ENCODE measurements at regions of chr12 and their contacts with region 1.

Region 1: GRCh38 chr12:108803428-108804105 is 53.8 kb downstream of the SSH1 start:
- DNase-seq: peak; percentile 94
- H3K4me3 ChIP-seq: peak overlapping the region in 1 of 4 donors; percentile 5
- H3K27ac ChIP-seq: peak overlapping the region; percentile 91 to 97 (median 92)
- H3K4me1 ChIP-seq: peaks cover 0 to 86% (median 81%) of the 10 kb centered on the region in 4 donors
- H3K27me3 ChIP-seq: no peaks in the 10 kb centered on the region
- CTCF ChIP-seq: peak; percentile 94 to 98 (median 96)
- EP300 ChIP-seq: peak in 1 of 4 donors; percentile 10
- POLR2A ChIP-seq: no peak

Region 2: DNA sequence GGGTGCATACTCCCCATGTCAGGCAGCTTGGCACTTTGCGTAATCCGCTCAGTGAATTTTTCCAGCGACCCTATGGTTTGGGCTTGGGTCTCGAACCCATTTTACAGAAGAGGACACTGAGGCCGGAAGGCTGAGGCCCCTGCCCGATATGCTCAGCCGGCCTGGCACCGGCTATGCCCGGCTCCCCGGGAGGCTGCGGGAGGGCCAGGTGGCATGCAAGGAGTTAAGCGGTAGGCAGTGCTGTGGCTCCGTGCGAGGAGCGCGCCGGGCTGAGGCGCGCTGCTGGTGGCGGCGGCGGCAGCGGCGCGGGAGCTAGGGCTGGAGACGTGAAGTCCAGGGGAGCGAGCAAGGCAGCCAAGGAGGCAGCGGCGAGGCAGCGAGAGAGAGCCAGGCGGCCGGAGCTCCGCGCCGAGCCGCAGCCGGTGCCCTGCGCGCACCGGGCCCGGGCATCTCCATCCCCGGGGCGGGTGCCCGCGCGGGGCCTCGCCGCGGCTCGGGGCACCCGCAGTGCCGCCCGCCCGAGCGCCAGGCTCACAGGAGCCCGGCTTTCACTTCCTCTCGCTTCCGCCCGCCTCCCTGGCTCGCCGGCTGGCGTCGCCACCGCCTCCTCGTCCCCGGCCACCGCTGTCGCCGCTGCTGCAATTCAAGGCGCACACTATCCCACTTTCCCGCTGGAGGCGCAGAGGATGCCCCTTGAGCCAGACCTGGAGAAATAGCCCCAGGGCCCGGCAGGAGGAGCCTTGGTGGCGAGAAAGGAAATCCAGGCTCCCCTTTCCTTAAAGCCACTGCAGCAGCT is 674.4 kb before region 1 on chr12 and contains the start of gene WSCD2:
- intact Hi-C with region 1: loop called (anchors 10 kb)
- DNase-seq: peak; percentile 77
- H3K4me3 ChIP-seq: peak within 1 kb of the TSS; percentile 32 to 68 (median 53)
- H3K27ac ChIP-seq: peak within 1 kb of the TSS; percentile 71 to 92 (median 82)
- H3K4me1 ChIP-seq: peaks cover 0 to 47% (median 29%) of the 10 kb centered on the region in 4 donors
- H3K27me3 ChIP-seq: peaks cover 0 to 13% (median 0%) of the 10 kb centered on the region in 3 donors
- CTCF ChIP-seq: peak in 2 of 4 experiments; percentile 23 to 26
- EP300 ChIP-seq: no peak
- POLR2A ChIP-seq: no peak
- total RNA-seq, gene WSCD2: 1.6 to 10.5 (median 3.8) TPM

Region 3: GRCh38 chr12:108664338-108665258 is 139.0 kb before region 1 on chr12:
- intact Hi-C with region 1: loop called (anchors 1 kb)
- DNase-seq: peak; percentile 97
- H3K4me3 ChIP-seq: no peak overlapping the region
- H3K27ac ChIP-seq: peak overlapping the region; percentile 83 to 99 (median 86)
- H3K4me1 ChIP-seq: peaks cover 0 to 82% (median 80%) of the 10 kb centered on the region in 4 donors
- H3K27me3 ChIP-seq: no peaks in the 10 kb centered on the region
- CTCF ChIP-seq: peak; percentile 88 to 96 (median 92)
- EP300 ChIP-seq: peak in 1 of 4 donors; percentile 19
- POLR2A ChIP-seq: no peak

Region 4: DNA sequence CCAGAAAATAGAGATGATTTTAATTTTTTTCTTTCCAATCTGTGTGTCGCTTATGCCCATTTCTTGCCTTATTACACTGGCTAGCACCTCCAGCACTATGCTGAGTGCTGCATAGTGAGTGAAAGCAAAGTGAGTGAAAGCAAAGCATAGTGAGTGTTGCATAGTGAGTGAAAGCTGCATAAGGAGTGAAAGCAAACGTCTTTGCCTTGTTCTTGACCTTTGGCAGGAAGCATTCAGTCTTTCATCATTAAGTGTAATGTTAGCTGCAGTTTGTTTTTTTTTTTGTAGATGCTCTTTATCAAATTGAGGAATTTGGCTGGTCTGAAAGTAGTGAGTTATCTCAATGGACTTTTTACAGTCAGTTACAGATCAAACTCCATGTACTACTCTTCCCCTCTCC is 65.4 kb before region 1 on chr12:
- intact Hi-C with region 1: no loop called
- DNase-seq: no peak
- H3K4me3 ChIP-seq: no peak overlapping the region
- H3K27ac ChIP-seq: no peak overlapping the region
- H3K4me1 ChIP-seq: peaks cover 0 to 7% (median 0%) of the 10 kb centered on the region in 4 donors
- H3K27me3 ChIP-seq: no peaks in the 10 kb centered on the region
- CTCF ChIP-seq: no peak
- EP300 ChIP-seq: no peak
- POLR2A ChIP-seq: no peak

Region 5: GRCh38 chr12:108768591-108769500 is 34.7 kb before region 1 on chr12:
- intact Hi-C with region 1: loop called (anchors 1 kb)
- DNase-seq: peak; percentile 81
- H3K4me3 ChIP-seq: peak overlapping the region; percentile 21 to 41 (median 34)
- H3K27ac ChIP-seq: peak overlapping the region; percentile 9 to 91 (median 36)
- H3K4me1 ChIP-seq: peaks cover 0 to 51% (median 36%) of the 10 kb centered on the region in 4 donors
- H3K27me3 ChIP-seq: no peaks in the 10 kb centered on the region
- CTCF ChIP-seq: no peak
- EP300 ChIP-seq: no peak
- POLR2A ChIP-seq: no peak

Region 6: GRCh38 chr12:108950991-108951739 is 147.6 kb after region 1 on chr12:
- intact Hi-C with region 1: loop called (anchors 10 kb)
- DNase-seq: peak; percentile 85
- H3K4me3 ChIP-seq: no peak overlapping the region
- H3K27ac ChIP-seq: no peak overlapping the region
- H3K4me1 ChIP-seq: peaks cover 0 to 9% (median 1%) of the 10 kb centered on the region in 4 donors
- H3K27me3 ChIP-seq: no peaks in the 10 kb centered on the region
- CTCF ChIP-seq: peak; percentile 81 to 92 (median 84)
- EP300 ChIP-seq: no peak
- POLR2A ChIP-seq: no peak